HEK293 (cell line): ENCODE measurements at regions of chr20 and their contacts with region 1.

Region 1: GRCh38 chr20:41173161-41173721 is 35.9 kb downstream of the PLCG1 start:
- H3K4me3 ChIP-seq: no peak overlapping the region
- H3K27ac ChIP-seq: no peak overlapping the region
- H3K4me1 ChIP-seq: no peaks in the 10 kb centered on the region
- CTCF ChIP-seq: peak; percentile 79

Region 2: DNA sequence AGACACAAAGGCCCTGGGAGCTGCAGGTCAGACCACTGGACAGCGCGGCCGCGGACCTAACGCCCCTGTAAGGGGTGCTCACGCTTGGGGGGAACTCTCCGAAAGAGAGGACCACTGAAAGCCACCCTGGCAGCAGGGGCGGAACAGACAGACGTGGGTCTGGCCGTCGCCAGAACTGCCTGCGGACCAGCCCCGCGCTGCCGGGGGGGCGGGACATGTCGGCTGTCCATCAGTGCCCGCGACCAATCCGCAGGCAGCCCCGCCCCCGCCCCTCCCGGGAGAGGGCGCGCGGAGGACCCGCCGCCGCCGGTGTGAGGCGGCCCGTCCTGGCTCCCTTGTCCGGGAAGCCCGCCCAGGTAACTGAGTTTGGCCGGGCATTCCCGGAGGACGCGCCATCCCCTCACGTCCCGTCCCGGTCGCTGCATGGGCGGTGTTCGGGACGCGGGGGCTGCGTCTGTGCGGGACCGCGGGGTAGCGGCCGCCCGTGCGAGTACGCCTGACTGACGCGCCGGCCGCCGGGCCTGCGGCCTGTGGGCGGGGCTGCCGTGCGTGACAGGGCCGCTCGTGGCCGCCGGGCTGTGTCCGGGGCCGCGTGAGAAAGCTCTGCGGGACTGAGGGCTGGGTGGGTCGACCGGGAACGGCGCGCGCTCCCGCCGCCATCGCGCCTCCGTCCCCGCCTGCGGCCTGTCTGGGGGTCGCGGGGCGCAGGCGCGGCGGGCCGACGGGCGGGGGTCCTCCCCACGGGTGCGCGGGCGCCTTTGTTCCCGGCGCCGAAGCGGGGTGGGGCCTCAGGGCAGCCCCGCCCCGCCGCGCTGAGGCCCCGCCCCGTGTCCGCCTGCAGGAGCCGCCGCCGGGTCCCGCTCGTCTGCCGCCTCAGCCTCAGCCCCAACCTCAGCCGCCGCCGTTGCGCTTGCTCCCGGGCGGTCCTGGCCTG is 36.3 kb before region 1 on chr20 and contains the start of gene PLCG1:
- CTCF ChIA-PET with region 1: interaction called, 22 read pairs
- POLR2A ChIA-PET with region 1: interaction called, 4 read pairs
- H3K4me3 ChIP-seq: peak within 1 kb of the TSS; percentile 88
- H3K27ac ChIP-seq: peak within 1 kb of the TSS; percentile 97
- H3K4me1 ChIP-seq: no peaks in the 10 kb centered on the region
- CTCF ChIP-seq: no peak

Region 3: GRCh38 chr20:41154436-41155176 is 18.6 kb before region 1 on chr20:
- CTCF ChIA-PET with region 1: interaction called, 15 read pairs
- POLR2A ChIA-PET with region 1: no interaction called
- H3K4me3 ChIP-seq: no peak overlapping the region
- H3K27ac ChIP-seq: peak overlapping the region; percentile 24; the same call in 1 of the 2 replicates
- H3K4me1 ChIP-seq: peaks cover 5% of the 10 kb centered on the region; the same call in 1 of the 2 replicates
- CTCF ChIP-seq: no peak

Region 4: DNA sequence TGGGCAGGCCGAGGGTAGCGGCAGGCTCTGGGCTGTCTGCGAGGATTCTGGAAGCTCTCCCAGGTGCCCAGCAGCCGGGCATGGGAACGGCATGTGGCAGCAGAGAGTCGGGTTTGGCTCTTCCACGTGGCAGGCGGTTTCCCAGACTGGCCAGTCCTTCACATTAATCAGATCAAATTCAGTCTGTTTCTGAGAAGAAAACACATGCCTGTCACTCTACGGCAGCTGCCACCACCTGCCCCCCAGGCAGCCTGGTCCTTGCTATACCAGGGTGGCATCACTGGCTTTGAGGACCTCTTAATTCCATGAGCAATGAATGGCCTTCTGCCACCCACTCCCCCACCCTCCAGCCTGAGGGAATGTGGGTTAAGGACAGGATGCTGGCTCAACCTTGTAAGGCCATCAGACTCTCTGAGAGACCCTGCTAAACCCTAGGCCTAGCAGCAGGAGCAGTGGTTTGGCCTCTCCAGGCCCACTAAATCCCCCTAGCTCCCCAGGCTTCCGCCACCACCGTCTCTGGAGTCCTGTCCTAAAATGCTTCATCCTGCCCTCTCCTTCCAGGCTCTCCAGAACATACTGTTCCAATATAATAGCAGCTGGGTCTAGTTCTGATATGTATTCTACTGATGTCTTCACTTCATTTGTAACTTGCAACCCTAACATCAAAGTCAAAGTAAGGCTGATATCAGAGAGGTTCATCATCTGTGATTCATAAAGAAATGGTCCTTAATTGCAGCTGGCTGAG is 11.9 kb after region 1 on chr20:
- CTCF ChIA-PET with region 1: interaction called, 13 read pairs
- POLR2A ChIA-PET with region 1: no interaction called
- H3K4me3 ChIP-seq: no peak overlapping the region
- H3K27ac ChIP-seq: no peak overlapping the region
- H3K4me1 ChIP-seq: no peaks in the 10 kb centered on the region
- CTCF ChIP-seq: no peak

Region 5: DNA sequence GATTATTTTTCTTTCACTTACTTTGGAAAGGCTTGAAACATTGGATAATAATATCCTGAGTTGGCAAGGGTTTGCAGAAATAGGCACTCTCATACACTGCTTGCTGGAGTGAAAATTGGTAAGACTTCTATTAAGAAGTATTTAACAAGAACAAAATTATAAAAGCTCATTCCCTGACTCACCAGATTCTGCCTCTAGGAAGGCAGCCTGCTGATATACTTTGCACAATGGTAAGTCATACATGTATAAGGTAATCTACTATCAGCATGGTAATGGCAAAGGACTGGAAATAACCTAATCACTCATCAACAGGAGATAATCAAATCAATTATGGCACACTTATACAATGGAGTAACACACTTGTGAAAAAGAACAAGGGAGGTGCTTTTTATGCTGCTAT is 49.9 kb after region 1 on chr20:
- CTCF ChIA-PET with region 1: interaction called, 10 read pairs
- POLR2A ChIA-PET with region 1: no interaction called
- H3K4me3 ChIP-seq: no peak overlapping the region
- H3K27ac ChIP-seq: no peak overlapping the region
- H3K4me1 ChIP-seq: no peaks in the 10 kb centered on the region
- CTCF ChIP-seq: no peak

Region 6: GRCh38 chr20:41232973-41233926 is 60.0 kb after region 1 on chr20:
- CTCF ChIA-PET with region 1: interaction called, 25 read pairs
- POLR2A ChIA-PET with region 1: no interaction called
- H3K4me3 ChIP-seq: no peak overlapping the region
- H3K27ac ChIP-seq: no peak overlapping the region
- H3K4me1 ChIP-seq: no peaks in the 10 kb centered on the region
- CTCF ChIP-seq: no peak

Region 7: DNA sequence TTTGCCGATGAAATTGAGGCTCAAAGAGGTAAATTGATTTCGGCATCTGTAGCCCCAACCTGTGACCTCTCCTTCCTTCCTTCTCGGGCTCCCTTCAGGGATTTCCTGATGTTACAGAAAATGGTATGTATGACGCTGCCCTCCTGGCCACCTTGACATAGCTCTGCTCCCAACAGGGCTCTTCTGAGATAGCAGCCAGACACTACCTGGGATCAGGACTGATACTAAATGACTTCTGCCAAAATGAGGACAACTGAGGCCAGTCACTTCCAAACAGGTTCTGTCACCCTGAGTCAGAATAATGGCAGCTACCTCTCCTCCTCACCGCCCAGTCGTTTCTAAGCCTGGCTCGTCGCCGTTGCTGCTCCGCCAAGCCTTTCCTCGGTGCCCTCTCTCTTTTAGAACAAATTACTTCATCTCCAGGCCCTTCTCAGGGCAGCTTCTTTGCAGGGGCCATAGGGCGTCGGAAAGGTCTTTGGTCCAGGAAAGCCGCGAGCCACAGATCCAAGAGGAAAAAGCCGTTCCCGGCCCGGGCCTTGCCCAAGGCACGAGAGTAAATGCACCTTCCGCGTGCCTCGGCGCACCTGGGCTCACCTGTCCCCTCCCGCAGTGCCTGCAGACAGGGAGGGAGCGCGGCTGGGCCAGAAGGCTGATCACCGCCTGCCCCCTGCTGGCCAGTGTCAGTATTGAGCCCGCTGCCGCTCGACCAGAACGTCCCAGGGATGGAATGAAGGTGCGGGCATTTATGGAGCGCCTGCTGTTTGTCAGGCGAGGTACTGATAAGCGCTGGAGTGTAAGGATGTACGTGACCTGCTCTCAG is 166.5 kb after region 1 on chr20:
- CTCF ChIA-PET with region 1: interaction called, 106 read pairs
- POLR2A ChIA-PET with region 1: interaction called, 8 read pairs
- H3K4me3 ChIP-seq: peak overlapping the region; percentile 42
- H3K27ac ChIP-seq: no peak overlapping the region
- H3K4me1 ChIP-seq: no peaks in the 10 kb centered on the region; the same call in 1 of the 2 replicates
- CTCF ChIP-seq: peak; percentile 97